PC-9 (cell line): ENCODE measurements at regions of chr7 and their contacts with region 1.

Region 1: DNA sequence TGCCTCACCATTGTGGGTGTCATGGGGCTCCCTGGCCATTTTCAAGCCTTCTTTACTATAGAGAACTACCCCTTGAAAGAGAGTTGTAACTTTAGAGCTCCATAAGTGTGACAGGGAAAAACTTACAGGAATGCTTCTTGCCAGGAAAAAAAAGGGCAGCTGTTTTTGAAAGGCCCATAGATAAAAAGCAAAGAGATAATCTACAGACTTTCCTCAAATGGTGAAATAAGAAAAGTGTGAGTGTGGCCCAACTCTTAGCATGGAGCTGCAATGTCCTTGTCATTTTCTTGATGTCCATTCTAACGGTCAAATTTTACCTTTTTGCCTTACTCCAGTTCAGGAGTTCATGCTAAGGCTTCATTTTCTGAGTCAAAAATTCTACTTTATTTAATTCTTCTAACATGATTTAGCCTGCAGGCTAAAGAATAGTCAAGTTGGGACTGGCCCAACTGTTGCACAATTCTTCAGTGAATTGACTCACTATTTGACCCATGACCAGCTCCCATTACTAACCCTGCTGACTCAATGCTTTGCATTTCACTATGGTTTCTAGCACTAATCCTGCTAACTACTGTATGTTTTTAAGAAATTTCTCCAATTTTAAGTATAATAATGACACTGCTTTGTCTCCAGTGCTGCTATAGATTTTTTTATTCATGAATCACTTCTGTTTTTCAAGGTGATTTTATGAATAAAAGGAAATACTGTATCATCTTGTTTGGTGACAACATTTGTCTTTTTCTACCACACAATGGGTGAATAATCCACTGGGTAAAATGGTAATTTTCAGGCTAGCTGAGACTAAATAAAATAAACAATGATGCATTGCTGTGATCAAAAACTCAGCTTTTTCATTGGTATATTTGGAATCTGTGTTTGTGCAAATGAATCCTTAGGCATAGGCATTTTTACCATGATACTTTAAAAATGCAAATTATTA is 41.4 kb upstream of the SGCE start:
- DNase-seq: peak; percentile 64 to 76
- H3K4me3 ChIP-seq: peak overlapping the region; percentile 28; the same call in 1 of the 2 replicates
- H3K27ac ChIP-seq: peak overlapping the region; percentile 80
- H3K4me1 ChIP-seq: peaks cover 40% of the 10 kb centered on the region
- H3K27me3 ChIP-seq: no peaks in the 10 kb centered on the region
- CTCF ChIP-seq: no peak

Region 2: GRCh38 chr7:94509879-94510581 is 187.3 kb before region 1 on chr7:
- CTCF ChIA-PET with region 1: no interaction called
- POLR2A ChIA-PET with region 1: no interaction called
- intact Hi-C with region 1: loop called (anchors 5 kb)
- DNase-seq: peak; percentile 58 to 75
- H3K4me3 ChIP-seq: peak overlapping the region; percentile 81
- H3K27ac ChIP-seq: peak overlapping the region; percentile 69
- H3K4me1 ChIP-seq: peaks cover 33% of the 10 kb centered on the region
- H3K27me3 ChIP-seq: no peaks in the 10 kb centered on the region
- CTCF ChIP-seq: no peak

Region 3: GRCh38 chr7:94710256-94710655 is 13.0 kb after region 1 on chr7:
- CTCF ChIA-PET with region 1: no interaction called
- POLR2A ChIA-PET with region 1: interaction called, 11 read pairs
- intact Hi-C with region 1: no loop called
- DNase-seq: no peak
- H3K4me3 ChIP-seq: no peak overlapping the region
- H3K27ac ChIP-seq: no peak overlapping the region
- H3K4me1 ChIP-seq: no peaks in the 10 kb centered on the region
- H3K27me3 ChIP-seq: no peaks in the 10 kb centered on the region
- CTCF ChIP-seq: no peak

Region 4: DNA sequence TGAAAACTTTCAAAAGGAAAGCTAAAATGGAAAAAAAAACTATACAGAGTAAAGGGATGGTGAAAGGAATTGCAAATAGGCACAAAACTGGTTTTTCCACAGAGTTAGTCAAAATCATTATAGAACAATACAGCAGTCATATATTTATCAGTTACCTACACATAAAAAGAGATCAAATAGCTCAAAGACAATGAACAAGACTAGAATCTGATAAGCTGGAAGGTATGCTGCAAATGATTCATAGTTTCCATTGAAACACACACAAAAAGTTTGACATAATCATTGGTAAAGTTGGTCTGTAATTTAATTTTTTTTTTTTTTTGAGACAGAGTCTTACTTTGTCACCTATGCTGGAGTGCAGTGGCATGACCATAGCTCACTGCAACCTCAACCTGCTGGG is 51.1 kb after region 1 on chr7:
- CTCF ChIA-PET with region 1: interaction called, 7 read pairs
- POLR2A ChIA-PET with region 1: no interaction called
- intact Hi-C with region 1: loop called (anchors 5 kb)
- DNase-seq: peak in 1 of 2 experiments; percentile 76
- H3K4me3 ChIP-seq: no peak overlapping the region
- H3K27ac ChIP-seq: 0 out of 2 replicates have a peak overlapping the region, but pooled peaks have one; percentile 33
- H3K4me1 ChIP-seq: peaks cover 13% of the 10 kb centered on the region; the same call in 1 of the 2 replicates
- H3K27me3 ChIP-seq: no peaks in the 10 kb centered on the region
- CTCF ChIP-seq: no peak